ENCODE measurements at regions of chr14 and their contacts with region 1.

Region 1: GRCh38 chr14:35046048-35046741 is at the start of gene FAM177A1:
- DNase-seq: peak; percentile 99
- ATAC-seq: peak; percentile 96 to 97 (median 96)
- H3K4me3 ChIP-seq: peak within 1 kb of the TSS; percentile 95
- H3K27ac ChIP-seq: peak within 1 kb of the TSS; percentile 95
- H3K4me1 ChIP-seq: peaks cover 24% of the 10 kb centered on the region
- H3K27me3 ChIP-seq: no peaks in the 10 kb centered on the region
- CTCF ChIP-seq: no peak
- total RNA-seq, gene FAM177A1: 33.1 to 83.3 (median 60.3) TPM

Region 2: GRCh38 chr14:34875031-34875922 is 170.9 kb before region 1 on chr14 and contains the start of gene BAZ1A:
- intact Hi-C with region 1: loop called in 1 of 2 experiments (anchors 2 kb)
- DNase-seq: peak; percentile 64 to 80
- ATAC-seq: peak; percentile 38 to 58 (median 56)
- H3K4me3 ChIP-seq: peak within 1 kb of the TSS; percentile 75
- H3K27ac ChIP-seq: peak within 1 kb of the TSS; percentile 99
- H3K4me1 ChIP-seq: peaks cover 12% of the 10 kb centered on the region
- H3K27me3 ChIP-seq: no peaks in the 10 kb centered on the region
- CTCF ChIP-seq: peak; percentile 19
- total RNA-seq, gene BAZ1A: 7.5 to 28.3 (median 15.5) TPM

Region 3: GRCh38 chr14:34982417-34983147 is 63.6 kb before region 1 on chr14 and contains the start of gene SRP54:
- intact Hi-C with region 1: loop called (anchors 2 to 5 kb)
- DNase-seq: peak; percentile 98 to 100
- ATAC-seq: peak; percentile 97 to 98 (median 98)
- H3K4me3 ChIP-seq: peak within 1 kb of the TSS; percentile 83
- H3K27ac ChIP-seq: peak within 1 kb of the TSS; percentile 99
- H3K4me1 ChIP-seq: peaks cover 32% of the 10 kb centered on the region
- H3K27me3 ChIP-seq: no peaks in the 10 kb centered on the region
- CTCF ChIP-seq: peak; percentile 3
- total RNA-seq, gene SRP54: 30.6 to 39.6 (median 34.6) TPM

Region 4: DNA sequence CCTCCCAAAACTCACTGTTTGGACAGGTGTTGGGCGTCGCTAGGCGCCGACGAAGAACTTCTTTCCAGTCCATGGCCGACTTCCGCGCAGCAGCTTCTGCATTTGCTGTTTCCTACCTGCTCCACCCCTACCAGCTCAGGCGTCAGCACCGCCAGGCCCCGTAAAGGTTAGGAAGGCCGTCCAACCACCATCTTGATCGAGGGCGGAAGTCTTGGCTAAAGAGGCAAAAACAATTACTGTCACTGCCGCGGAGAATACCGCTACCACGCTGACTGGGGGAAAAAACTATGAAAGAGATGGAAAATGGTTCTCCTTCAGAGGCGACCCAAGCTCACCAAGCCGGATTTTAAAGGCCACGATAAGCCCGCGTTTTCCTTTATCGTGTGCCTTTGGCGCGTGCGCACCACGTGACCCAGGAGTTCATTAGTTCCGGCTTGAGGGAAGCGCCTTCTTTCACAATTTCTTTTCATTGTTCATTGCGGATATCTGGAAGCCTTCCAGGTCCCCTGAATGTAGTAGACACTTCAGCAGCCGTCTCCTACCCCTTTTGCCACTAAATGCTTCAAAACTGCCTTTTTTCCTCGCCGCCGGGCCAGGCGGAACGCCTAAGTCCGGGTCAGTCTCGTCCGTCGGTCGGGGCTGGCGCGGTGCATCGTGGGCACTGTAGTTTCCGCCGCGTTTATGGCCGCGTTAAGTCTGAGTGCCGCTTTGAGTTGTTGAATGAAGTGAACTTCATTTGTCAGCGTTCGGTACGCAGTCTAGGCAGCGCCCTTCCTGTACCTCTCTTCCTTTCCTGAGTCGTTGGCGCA is 75.9 kb after region 1 on chr14 and contains the starts of genes PPP2R3C and PRORP:
- intact Hi-C with region 1: loop called in 1 of 2 experiments (anchors 5 kb)
- DNase-seq: peak; percentile 88 to 96
- ATAC-seq: peak; percentile 93 to 95 (median 94)
- H3K4me3 ChIP-seq: peak within 1 kb of the TSS; percentile 82
- H3K27ac ChIP-seq: peak within 1 kb of the TSS; percentile 96
- H3K4me1 ChIP-seq: peaks cover 19% of the 10 kb centered on the region
- H3K27me3 ChIP-seq: no peaks in the 10 kb centered on the region
- CTCF ChIP-seq: no peak
- total RNA-seq, gene PPP2R3C: 22.9 to 37.1 (median 27.9) TPM
- total RNA-seq, gene PRORP: 15.1 to 23.0 (median 17.0) TPM